CD8-positive, alpha-beta T cell (primary cell): ENCODE measurements at regions of chr1 and their contacts with region 1.

Region 1: DNA sequence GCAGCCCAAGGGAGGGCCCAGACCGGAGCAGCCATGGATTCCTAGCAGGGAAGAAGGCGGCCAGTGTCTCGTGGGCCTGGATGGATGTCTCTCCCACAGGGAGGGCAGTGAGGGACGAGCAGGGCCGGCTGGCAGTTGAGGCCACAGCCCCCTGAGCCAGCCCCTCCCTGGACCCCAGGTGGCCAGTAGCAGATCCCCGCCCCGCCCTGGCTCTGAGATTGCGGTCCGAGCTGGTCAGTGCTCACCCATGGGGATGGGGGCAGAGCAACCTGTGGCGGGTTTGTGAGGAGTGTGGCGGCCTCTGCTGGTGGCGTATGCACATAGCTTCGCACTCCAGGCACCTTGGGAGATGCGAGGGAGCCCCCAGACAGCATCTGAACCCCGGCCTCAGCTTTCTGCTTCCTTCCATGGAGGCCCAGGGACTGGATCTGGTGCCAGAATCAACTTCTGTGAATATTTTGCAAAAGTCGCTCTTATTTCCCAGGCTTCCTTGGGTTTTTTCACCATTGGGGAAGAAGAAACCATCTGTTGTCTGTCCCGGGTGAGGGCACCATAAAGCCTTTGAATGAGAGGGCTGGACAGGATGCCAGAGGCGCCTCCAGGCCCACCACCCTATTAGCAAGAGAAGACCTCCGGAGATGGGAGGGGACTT is 8.4 kb upstream of the KCNN3 start:
- DNase-seq: peak; percentile 49 to 84 (median 74)
- ATAC-seq: peak; percentile 97
- H3K4me3 ChIP-seq: no peak overlapping the region
- H3K4me3 Mint-ChIP-seq: no peak overlapping the region
- H3K27ac ChIP-seq: no peak overlapping the region
- H3K27ac Mint-ChIP-seq: no peak overlapping the region
- H3K4me1 ChIP-seq: no peaks in the 10 kb centered on the region
- H3K4me1 Mint-ChIP-seq: no peaks in the 10 kb centered on the region
- H3K27me3 ChIP-seq: no peaks in the 10 kb centered on the region
- H3K27me3 Mint-ChIP-seq: no peaks in the 10 kb centered on the region
- CTCF ChIP-seq: peak; percentile 65

Region 2: GRCh38 chr1:154479764-154480421 is 398.6 kb before region 1 on chr1:
- CTCF ChIA-PET with region 1: interaction called, 6 read pairs
- POLR2A ChIA-PET with region 1: no interaction called
- intact Hi-C with region 1: loop called (anchors 1 kb)
- DNase-seq: peak in 8 of 9 experiments; percentile 12 to 80 (median 58)
- ATAC-seq: peak; percentile 91
- H3K4me3 ChIP-seq: no peak overlapping the region
- H3K4me3 Mint-ChIP-seq: no peak overlapping the region
- H3K27ac ChIP-seq: no peak overlapping the region
- H3K27ac Mint-ChIP-seq: no peak overlapping the region
- H3K4me1 ChIP-seq: peaks cover 3% of the 10 kb centered on the region
- H3K4me1 Mint-ChIP-seq: peaks cover 9% of the 10 kb centered on the region
- H3K27me3 ChIP-seq: no peaks in the 10 kb centered on the region
- H3K27me3 Mint-ChIP-seq: peaks cover 3% of the 10 kb centered on the region
- CTCF ChIP-seq: peak; percentile 98

Region 3: GRCh38 chr1:154669464-154670282 is 208.8 kb before region 1 on chr1:
- CTCF ChIA-PET with region 1: interaction called, 51 read pairs
- POLR2A ChIA-PET with region 1: interaction called, 4 read pairs
- intact Hi-C with region 1: loop called (anchors 1 kb)
- DNase-seq: peak; percentile 48 to 86 (median 74)
- ATAC-seq: peak; percentile 100
- H3K4me3 ChIP-seq: no peak overlapping the region
- H3K4me3 Mint-ChIP-seq: no peak overlapping the region
- H3K27ac ChIP-seq: no peak overlapping the region
- H3K27ac Mint-ChIP-seq: no peak overlapping the region
- H3K4me1 ChIP-seq: peaks cover 3% of the 10 kb centered on the region
- H3K4me1 Mint-ChIP-seq: no peaks in the 10 kb centered on the region
- H3K27me3 ChIP-seq: no peaks in the 10 kb centered on the region
- H3K27me3 Mint-ChIP-seq: no peaks in the 10 kb centered on the region
- CTCF ChIP-seq: peak; percentile 80

Region 4: DNA sequence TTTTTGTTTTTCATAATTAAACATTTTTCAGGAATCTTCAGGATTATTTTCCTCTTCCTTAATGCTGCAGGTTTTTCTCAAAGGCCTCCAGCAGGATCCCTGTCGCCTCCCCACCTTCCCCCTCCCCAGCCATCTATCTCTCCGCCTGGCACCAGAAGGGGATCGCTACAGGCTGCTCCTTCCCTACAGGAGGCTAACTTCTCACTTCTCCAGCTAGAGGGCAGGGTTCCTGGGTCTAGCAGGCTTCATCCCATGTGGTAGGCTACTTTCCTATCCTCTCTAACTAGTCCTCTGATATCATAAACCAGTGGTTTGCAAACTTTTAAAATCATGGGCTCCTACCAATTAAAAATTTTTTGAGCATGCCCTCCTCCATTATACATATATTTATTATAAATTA is 112.5 kb before region 1 on chr1:
- CTCF ChIA-PET with region 1: interaction called, 12 read pairs
- POLR2A ChIA-PET with region 1: no interaction called
- intact Hi-C with region 1: loop called (anchors 1 to 2 kb)
- DNase-seq: peak in 2 of 9 experiments; percentile 37 to 51
- ATAC-seq: peak; percentile 68
- H3K4me3 ChIP-seq: no peak overlapping the region
- H3K4me3 Mint-ChIP-seq: no peak overlapping the region
- H3K27ac ChIP-seq: no peak overlapping the region
- H3K27ac Mint-ChIP-seq: no peak overlapping the region
- H3K4me1 ChIP-seq: no peaks in the 10 kb centered on the region
- H3K4me1 Mint-ChIP-seq: peaks cover 2% of the 10 kb centered on the region
- H3K27me3 ChIP-seq: no peaks in the 10 kb centered on the region
- H3K27me3 Mint-ChIP-seq: peaks cover 5% of the 10 kb centered on the region
- CTCF ChIP-seq: no peak

Region 5: GRCh38 chr1:154772606-154773506 is 105.6 kb before region 1 on chr1:
- CTCF ChIA-PET with region 1: interaction called, 6 read pairs
- POLR2A ChIA-PET with region 1: no interaction called
- intact Hi-C with region 1: loop called (anchors 1 kb)
- DNase-seq: peak in 7 of 9 experiments; percentile 33 to 64 (median 54)
- ATAC-seq: peak; percentile 62
- H3K4me3 ChIP-seq: no peak overlapping the region
- H3K4me3 Mint-ChIP-seq: no peak overlapping the region
- H3K27ac ChIP-seq: no peak overlapping the region
- H3K27ac Mint-ChIP-seq: no peak overlapping the region
- H3K4me1 ChIP-seq: no peaks in the 10 kb centered on the region
- H3K4me1 Mint-ChIP-seq: peaks cover 2% of the 10 kb centered on the region
- H3K27me3 ChIP-seq: no peaks in the 10 kb centered on the region
- H3K27me3 Mint-ChIP-seq: no peaks in the 10 kb centered on the region
- CTCF ChIP-seq: peak; percentile 28

Region 6: DNA sequence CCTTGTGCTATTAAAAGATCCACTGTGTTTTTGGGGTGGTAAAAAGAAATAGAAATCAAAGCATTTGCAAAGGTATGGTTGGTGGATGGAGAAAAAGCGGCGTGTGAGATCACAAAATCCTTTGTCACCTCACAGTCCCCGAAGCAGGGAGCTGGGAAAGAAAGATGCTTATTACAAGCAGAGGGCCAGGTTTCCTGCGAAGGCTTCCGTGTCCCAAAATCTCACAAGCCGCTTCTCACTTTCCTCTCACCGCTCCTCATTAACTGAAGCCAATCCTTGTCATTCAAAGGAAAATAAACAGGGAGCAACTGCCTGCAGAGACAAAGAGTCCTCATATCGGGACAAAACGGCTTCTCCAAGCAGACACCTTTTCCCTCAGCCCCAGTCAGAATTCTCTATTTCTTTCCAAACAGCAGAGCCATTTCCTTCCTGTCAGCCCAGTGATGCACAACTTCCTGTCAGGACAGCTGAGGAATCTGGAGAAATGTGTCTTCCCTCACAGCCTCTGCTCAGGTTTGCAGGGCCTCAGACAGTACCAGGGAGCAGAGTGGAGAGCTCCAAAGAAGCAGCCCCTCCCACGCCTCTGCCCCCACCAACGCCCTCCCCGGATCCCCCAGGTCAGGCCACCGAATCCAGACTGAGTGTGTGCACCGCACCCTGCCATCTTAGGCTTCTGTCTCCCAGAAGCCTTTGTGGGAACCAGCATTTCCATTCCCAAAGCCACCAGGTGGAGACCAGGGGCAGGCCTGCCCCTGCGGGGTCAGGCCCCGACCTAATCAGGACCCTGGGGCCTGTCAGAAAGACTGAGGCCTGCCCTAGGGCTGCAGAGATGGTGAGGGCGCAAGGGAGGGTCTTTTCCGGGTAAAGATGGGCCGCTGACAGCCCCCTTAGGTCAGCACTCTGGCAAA is 38.0 kb before region 1 on chr1:
- CTCF ChIA-PET with region 1: no interaction called
- POLR2A ChIA-PET with region 1: no interaction called
- intact Hi-C with region 1: no loop called
- DNase-seq: no peak
- ATAC-seq: no peak
- H3K4me3 ChIP-seq: no peak overlapping the region
- H3K4me3 Mint-ChIP-seq: no peak overlapping the region
- H3K27ac ChIP-seq: no peak overlapping the region
- H3K27ac Mint-ChIP-seq: no peak overlapping the region
- H3K4me1 ChIP-seq: no peaks in the 10 kb centered on the region
- H3K4me1 Mint-ChIP-seq: no peaks in the 10 kb centered on the region
- H3K27me3 ChIP-seq: no peaks in the 10 kb centered on the region
- H3K27me3 Mint-ChIP-seq: no peaks in the 10 kb centered on the region
- CTCF ChIP-seq: no peak

Region 7: DNA sequence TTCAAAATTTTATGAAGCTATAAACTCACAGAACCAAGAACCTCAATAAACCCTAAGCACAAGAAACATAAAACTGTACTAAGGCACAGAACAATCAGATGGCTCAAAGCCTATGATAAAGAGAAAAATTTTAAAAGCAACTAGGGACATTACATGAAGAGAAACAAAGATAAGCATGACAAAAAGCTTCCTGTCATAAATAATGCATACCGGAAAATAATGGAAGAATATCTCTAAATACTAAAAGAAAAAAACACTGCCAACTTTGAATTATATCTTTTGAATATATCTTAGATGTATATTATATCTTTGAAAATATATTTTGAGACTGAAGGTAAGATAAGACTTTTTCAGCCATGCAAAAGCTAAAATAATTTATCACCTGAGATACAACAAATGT is 13.0 kb after region 1 on chr1:
- CTCF ChIA-PET with region 1: interaction called, 19 read pairs
- POLR2A ChIA-PET with region 1: no interaction called
- intact Hi-C with region 1: no loop called
- DNase-seq: no peak
- ATAC-seq: no peak
- H3K4me3 ChIP-seq: no peak overlapping the region
- H3K4me3 Mint-ChIP-seq: no peak overlapping the region
- H3K27ac ChIP-seq: no peak overlapping the region
- H3K27ac Mint-ChIP-seq: no peak overlapping the region
- H3K4me1 ChIP-seq: no peaks in the 10 kb centered on the region
- H3K4me1 Mint-ChIP-seq: no peaks in the 10 kb centered on the region
- H3K27me3 ChIP-seq: no peaks in the 10 kb centered on the region
- H3K27me3 Mint-ChIP-seq: no peaks in the 10 kb centered on the region
- CTCF ChIP-seq: no peak

Region 8: GRCh38 chr1:156320560-156320959 is 1442.1 kb after region 1 on chr1:
- CTCF ChIA-PET with region 1: no interaction called
- POLR2A ChIA-PET with region 1: no interaction called
- intact Hi-C with region 1: no loop called
- DNase-seq: no peak
- ATAC-seq: no peak
- H3K4me3 ChIP-seq: no peak overlapping the region
- H3K4me3 Mint-ChIP-seq: no peak overlapping the region
- H3K27ac ChIP-seq: no peak overlapping the region
- H3K27ac Mint-ChIP-seq: no peak overlapping the region
- H3K4me1 ChIP-seq: no peaks in the 10 kb centered on the region
- H3K4me1 Mint-ChIP-seq: no peaks in the 10 kb centered on the region
- H3K27me3 ChIP-seq: no peaks in the 10 kb centered on the region
- H3K27me3 Mint-ChIP-seq: no peaks in the 10 kb centered on the region
- CTCF ChIP-seq: no peak